AG04450 (cell line): ENCODE measurements at regions of chr20 and their contacts with region 1.

Region 1: GRCh38 chr20:23606652-23607049 is 934 bp upstream of the CST9 start:
- DNase-seq: peak; percentile 42
- H3K4me3 ChIP-seq: no peak overlapping the region
- H3K27ac ChIP-seq: no peak overlapping the region
- H3K27me3 ChIP-seq: peaks cover 23% of the 10 kb centered on the region
- CTCF ChIP-seq: peak; percentile 95

Region 2: DNA sequence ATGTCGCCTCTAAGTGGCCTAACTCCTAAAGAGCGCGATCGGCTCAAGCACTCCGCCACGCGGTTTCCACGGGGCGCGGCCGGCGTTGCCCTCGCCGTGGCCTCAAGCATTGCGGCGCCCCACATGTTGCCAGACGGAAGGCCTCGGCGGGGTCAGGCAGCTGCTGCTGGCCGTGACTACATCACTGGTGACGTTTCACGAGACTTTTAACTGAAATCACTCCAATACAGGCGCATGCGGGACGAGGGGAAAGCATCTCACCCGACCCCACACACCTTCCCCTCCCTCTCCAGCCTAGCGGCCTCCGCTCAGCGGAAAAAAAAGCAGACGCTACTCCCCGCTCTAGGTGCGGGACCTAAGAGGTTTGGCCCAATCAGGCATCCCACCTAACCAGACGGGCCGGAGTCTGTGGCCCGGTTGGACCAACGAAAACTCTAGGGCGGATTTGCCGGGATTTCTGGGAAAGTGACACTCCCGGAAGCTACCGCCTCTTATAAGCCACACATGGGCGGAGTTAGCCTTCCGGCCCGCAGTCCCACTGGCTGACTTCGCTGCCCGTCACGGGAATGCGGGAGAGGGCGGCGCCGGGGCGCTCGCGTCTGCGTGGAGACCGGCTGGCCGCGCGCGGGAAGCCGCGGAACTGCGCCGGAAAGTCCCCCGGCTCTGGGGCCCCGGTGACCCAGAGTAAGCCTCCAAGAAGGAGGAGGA is 256.3 kb before region 1 on chr20 and contains the start of gene NXT1:
- CTCF ChIA-PET with region 1: interaction called, 15 read pairs
- POLR2A ChIA-PET with region 1: no interaction called
- DNase-seq: peak; percentile 97
- H3K4me3 ChIP-seq: peak within 1 kb of the TSS; percentile 90
- H3K27ac ChIP-seq: peak within 1 kb of the TSS; percentile 99
- H3K27me3 ChIP-seq: no peaks in the 10 kb centered on the region
- CTCF ChIP-seq: no peak
- polyA plus RNA-seq, gene NXT1: 17.9 and 19.5 TPM in 2 replicates

Region 3: GRCh38 chr20:23435626-23436539 is 170.8 kb before region 1 on chr20:
- CTCF ChIA-PET with region 1: interaction called, 95 read pairs
- POLR2A ChIA-PET with region 1: no interaction called
- DNase-seq: no peak
- H3K4me3 ChIP-seq: no peak overlapping the region
- H3K27ac ChIP-seq: no peak overlapping the region
- H3K27me3 ChIP-seq: no peaks in the 10 kb centered on the region
- CTCF ChIP-seq: no peak

Region 4: DNA sequence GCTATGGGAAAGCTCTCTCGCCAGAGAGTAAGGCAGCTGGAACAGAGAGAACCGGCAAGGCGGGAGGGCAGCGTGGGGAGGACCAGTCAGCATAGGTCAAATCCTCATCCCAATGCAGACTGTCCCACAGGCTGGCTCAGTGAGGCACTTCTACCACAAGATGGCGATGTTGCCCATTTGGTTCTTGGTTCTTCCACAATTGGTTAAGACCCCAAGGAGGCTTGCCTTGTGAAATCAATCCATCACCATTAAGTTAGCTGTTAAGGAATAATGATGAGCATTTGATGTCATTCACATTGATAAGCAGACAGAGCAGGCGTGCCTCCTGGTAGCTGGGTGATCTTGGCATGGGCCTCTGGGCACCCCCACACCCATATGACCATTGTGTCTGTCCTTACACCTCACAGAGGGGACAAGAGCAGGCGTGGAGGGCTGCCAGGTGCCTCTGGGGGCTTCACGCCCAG is 164.8 kb before region 1 on chr20:
- CTCF ChIA-PET with region 1: interaction called, 95 read pairs
- POLR2A ChIA-PET with region 1: no interaction called
- DNase-seq: peak; percentile 45
- H3K4me3 ChIP-seq: no peak overlapping the region
- H3K27ac ChIP-seq: no peak overlapping the region
- H3K27me3 ChIP-seq: peaks cover 3% of the 10 kb centered on the region
- CTCF ChIP-seq: peak; percentile 88

Region 5: GRCh38 chr20:23622839-23623343 is 16.2 kb after region 1 on chr20:
- CTCF ChIA-PET with region 1: interaction called, 24 read pairs
- POLR2A ChIA-PET with region 1: no interaction called
- DNase-seq: peak; percentile 24
- H3K4me3 ChIP-seq: peak overlapping the region; percentile 55
- H3K27ac ChIP-seq: peak overlapping the region; percentile 77
- H3K27me3 ChIP-seq: no peaks in the 10 kb centered on the region
- CTCF ChIP-seq: no peak